Gastrocnemius medialis (tissue), 4 donors: ENCODE measurements at regions of chr6 and their contacts with region 1.

Region 1: DNA sequence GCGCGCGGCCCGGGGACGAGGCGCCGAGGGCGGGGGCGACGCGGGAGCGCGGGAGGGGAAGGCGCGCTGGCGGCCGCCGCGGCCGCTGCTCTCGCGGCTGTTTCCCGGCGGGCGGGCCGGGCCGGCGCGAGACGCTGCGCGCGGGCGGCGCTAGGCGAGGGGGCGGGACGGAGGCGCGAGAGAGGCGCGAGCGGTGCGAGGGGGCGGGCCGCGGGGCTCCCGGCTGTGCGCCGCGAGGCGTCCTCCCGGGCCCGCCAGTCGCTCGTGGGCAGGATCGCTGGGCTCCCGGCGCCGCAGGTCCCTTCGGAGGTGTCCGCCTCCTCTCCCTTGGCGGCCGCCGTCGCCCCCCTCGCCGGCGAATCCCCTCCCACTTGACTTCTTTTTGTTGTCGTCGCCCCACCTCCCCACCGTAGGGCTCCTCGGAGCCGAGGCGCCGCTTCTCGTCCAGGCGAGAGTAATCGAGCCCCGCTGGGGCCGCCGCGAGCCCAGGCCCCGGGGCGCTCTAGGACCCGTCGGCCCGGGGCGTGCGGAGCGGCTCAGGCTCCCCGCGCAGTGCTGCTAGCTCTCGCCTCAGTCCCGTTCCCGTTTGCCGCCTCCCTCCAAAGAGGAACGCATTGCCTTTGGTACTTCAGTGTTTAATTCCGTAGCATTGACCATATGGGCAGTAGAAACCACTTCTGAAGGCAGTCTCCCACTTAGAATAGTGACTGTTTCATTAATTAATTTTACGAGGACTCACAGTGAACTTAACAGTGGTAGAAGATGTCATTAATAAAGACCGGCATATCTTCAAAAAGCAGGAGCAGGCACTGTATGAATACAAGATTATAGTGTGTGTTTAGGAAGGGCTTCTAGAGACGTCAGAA is at the start of gene RANBP9:
- DNase-seq: peak; percentile 79 to 91
- ATAC-seq: peak; percentile 77 to 79
- H3K4me3 ChIP-seq: peak within 1 kb of the TSS; percentile 70 to 91 (median 77)
- H3K27ac ChIP-seq: peak within 1 kb of the TSS; percentile 91 to 99 (median 96)
- H3K4me1 ChIP-seq: peaks cover 25 to 33% of the 10 kb centered on the region in 2 donors
- H3K27me3 ChIP-seq: no peaks in the 10 kb centered on the region
- CTCF ChIP-seq: no peak
- POLR2A ChIP-seq: peak; percentile 88 to 94
- total RNA-seq, gene RANBP9: 44.7 to 93.1 (median 63.3) TPM

Region 2: GRCh38 chr6:13466304-13467215 is 245.4 kb before region 1 on chr6:
- in situ Hi-C with region 1: no loop called
- intact Hi-C with region 1: loop called (anchors 10 kb)
- DNase-seq: no peak
- ATAC-seq: peak in 1 of 2 donors; percentile 42
- H3K4me3 ChIP-seq: peak overlapping the region in 2 of 4 donors; percentile 0 to 17
- H3K27ac ChIP-seq: peak overlapping the region; percentile 43 to 67 (median 53)
- H3K4me1 ChIP-seq: peaks cover 20 to 36% of the 10 kb centered on the region in 2 donors
- H3K27me3 ChIP-seq: no peaks in the 10 kb centered on the region
- CTCF ChIP-seq: no peak
- POLR2A ChIP-seq: no peak

Region 3: DNA sequence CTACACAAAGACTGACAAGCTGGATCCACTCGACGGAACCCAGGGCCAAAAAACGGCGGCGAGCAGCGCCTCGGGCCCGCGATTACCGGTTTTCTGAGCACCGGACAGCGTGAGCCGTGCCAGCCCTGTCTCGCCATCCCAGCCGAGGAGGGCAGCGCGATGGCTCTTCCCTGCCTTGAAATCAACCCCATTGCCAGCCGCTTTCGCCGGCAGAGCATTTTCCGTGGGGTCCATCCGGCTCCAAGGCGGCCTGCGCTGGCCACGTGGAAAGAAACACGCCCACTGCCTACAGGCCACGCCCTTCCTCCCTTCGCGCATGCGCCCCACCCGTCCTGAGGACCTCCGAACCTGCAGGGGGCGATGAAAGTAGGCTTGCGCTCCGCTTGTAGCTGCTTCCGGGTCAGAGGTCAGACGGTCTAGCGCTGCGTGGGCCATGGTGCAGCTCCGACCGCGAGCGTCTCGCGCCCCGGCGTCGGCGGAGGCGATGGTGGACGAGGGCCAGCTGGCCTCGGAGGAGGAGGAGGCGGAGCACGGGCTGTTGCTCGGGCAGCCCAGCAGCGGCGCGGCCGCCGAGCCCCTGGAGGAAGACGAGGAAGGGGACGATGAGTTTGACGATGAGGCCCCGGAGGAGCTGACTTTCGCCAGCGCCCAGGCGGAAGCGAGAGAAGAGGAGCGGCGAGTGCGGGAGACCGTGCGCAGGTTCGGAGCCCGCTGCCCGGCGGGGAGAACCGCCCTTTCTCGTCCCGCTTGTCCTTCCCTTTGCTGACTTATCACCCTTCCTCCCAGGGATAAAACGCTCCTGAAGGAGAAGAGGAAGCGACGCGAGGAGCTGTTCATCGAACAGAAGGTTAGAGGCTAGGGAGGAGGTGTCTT is 96.8 kb before region 1 on chr6 and contains the start of gene NOL7:
- in situ Hi-C with region 1: loop called in 2 of 4 experiments (anchors 10 to 25 kb)
- intact Hi-C with region 1: loop called (anchors 1 kb)
- DNase-seq: peak; percentile 97 to 98
- ATAC-seq: peak; percentile 95 to 97
- H3K4me3 ChIP-seq: peak within 1 kb of the TSS; percentile 68 to 95 (median 78)
- H3K27ac ChIP-seq: peak within 1 kb of the TSS; percentile 84 to 91 (median 88)
- H3K4me1 ChIP-seq: peaks cover 21 to 34% of the 10 kb centered on the region in 2 donors
- H3K27me3 ChIP-seq: no peaks in the 10 kb centered on the region
- CTCF ChIP-seq: peak; percentile 88 to 93 (median 92)
- POLR2A ChIP-seq: peak; percentile 67 to 73
- total RNA-seq, gene NOL7: 44.9 to 69.0 (median 63.8) TPM

Region 4: DNA sequence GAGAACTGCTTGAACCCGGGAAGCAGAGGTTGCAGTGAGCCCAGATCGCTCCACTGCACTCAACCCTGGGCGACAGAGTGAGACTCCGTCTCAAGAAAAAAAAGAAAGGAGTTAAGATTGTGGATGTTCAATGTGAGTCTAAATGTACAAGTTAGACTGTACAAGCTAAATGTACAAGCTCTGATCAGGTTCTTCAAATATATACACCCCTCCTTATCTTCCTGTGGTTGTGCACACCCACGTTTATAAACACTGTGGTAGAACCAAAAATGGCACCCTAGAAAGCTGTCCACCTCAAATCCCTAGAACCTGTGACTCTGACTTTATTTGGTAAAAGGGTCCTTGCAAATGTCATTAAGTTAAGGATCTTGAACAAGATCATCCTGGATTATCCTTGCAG is 10.9 kb after region 1 on chr6:
- in situ Hi-C with region 1: no loop called
- intact Hi-C with region 1: no loop called
- DNase-seq: no peak
- ATAC-seq: no peak
- H3K4me3 ChIP-seq: no peak overlapping the region
- H3K27ac ChIP-seq: no peak overlapping the region
- H3K4me1 ChIP-seq: no peaks in the 10 kb centered on the region
- H3K27me3 ChIP-seq: no peaks in the 10 kb centered on the region
- CTCF ChIP-seq: no peak
- POLR2A ChIP-seq: no peak

Region 5: DNA sequence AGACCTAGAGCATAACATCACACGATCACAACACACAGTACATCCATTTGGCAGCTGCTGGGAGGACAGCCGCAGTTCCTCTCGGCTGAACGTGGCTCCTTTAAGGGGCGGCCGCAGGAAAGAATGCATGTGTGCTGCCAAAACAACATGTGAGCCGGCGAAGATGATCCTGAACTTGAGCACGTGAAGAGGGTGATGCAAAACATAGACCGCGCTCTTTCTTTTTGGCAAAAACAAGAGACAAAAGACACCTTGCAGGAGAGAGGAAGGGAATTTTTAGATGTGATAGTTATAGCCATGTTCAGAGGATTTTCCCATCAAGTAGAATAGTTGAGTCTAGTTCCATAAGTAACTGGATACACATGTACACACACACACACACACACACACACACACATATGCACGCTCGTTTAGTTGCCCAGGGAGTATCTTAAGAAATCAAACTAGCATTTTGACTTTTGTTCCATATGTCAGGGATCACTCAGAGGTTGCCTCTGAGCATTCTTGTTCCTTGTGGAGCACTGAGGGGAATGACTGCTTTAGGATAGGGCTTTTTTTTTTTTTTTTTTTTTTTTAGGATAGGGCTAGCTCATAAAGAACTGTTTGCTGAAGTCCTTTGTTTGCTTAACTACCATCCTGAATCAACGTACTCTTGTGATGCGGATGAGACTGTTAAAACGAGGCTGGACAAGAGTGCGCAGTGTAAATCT is 21.4 kb after region 1 on chr6:
- in situ Hi-C with region 1: no loop called
- intact Hi-C with region 1: loop called (anchors 1 kb)
- DNase-seq: peak; percentile 93 to 94
- ATAC-seq: peak; percentile 99
- H3K4me3 ChIP-seq: peak overlapping the region in 3 of 4 donors; percentile 18 to 39 (median 38)
- H3K27ac ChIP-seq: peak overlapping the region; percentile 63 to 77 (median 74)
- H3K4me1 ChIP-seq: peaks cover 0 to 13% of the 10 kb centered on the region in 2 donors
- H3K27me3 ChIP-seq: no peaks in the 10 kb centered on the region
- CTCF ChIP-seq: peak in 1 of 5 experiments; percentile 18
- POLR2A ChIP-seq: peak in 1 of 2 donors; percentile 1

Region 6: DNA sequence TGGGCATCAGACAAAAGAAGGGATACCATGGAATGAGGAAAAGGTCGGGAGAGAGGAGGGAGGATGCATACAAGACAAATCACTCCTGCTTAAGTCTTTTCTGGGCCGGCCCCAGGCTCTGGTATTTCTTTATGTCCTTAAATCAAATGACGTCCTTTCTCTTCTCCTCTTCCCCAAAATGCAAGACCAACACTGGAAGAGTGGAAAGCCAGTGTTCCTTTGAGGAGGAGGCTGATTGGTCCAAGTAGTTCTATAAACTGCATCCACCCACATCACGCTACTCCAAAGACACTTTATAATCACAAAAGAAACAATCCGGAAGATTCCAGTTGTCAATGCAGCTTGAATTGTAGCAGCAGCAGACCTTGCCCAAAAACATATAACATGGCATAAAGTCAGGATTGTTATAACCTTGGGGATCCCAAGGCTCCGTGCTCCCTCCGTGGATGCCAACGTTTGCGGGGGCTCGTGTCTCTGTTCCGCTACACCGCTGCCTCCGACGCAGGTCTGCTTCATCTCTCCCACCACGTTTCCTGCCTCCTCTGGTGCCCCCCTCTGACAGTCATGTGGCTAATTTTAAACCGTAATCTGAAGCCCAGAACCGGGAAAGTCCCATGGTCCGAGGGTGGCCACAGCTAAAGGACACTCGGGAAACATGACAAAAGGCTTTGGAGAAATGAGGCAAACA is 55.3 kb after region 1 on chr6:
- in situ Hi-C with region 1: no loop called
- intact Hi-C with region 1: loop called (anchors 1 kb)
- DNase-seq: peak; percentile 43 to 66
- ATAC-seq: peak; percentile 86 to 92
- H3K4me3 ChIP-seq: peak overlapping the region; percentile 20 to 39 (median 25)
- H3K27ac ChIP-seq: peak overlapping the region in 2 of 4 donors; percentile 8 to 60
- H3K4me1 ChIP-seq: peaks cover 3 to 7% of the 10 kb centered on the region in 2 donors
- H3K27me3 ChIP-seq: no peaks in the 10 kb centered on the region
- CTCF ChIP-seq: peak in 1 of 5 experiments; percentile 11
- POLR2A ChIP-seq: no peak

Region 7: DNA sequence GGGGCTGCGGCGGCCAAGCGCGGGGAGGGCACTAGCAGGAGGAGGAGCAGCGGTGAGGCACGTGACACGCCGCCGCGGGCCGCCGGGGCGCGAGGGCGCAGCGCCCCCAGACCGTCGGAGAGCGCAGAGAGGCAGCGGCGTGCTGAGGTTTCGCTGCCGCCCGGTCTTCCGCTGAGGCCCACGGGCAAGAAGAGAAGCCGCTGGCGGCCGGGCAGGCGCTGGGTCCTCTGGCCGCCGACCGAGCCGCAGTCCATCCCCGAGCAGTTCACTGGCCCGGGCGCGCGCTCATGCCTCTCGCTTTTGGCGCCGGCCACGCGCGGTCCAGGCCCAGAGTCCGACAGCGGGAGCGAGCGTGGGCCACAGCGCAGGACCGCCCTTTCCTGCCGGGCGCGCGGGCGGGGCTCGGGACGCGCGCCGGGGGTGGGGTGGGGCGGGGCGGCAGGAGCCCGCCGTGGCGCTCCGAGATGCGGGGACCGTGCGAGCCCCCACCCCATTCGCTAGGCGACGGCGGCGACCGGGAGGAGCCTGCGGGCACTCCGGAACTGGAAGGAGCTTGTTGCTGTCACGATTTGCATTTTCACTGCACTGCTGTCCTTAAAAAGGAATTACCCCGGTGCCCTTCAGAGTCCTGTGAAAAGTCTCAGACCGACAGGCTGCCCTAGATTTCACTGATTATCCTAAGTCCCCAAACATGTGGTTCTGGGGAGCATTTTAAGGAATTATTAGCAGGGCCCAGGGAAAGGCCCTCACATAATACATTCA is 102.4 kb after region 1 on chr6 and contains the start of gene MCUR1:
- in situ Hi-C with region 1: no loop called
- intact Hi-C with region 1: loop called (anchors 2 kb)
- DNase-seq: peak; percentile 75 to 84
- ATAC-seq: peak; percentile 88 to 92
- H3K4me3 ChIP-seq: peak within 1 kb of the TSS; percentile 74 to 98 (median 82)
- H3K27ac ChIP-seq: peak within 1 kb of the TSS; percentile 92 to 99 (median 98)
- H3K4me1 ChIP-seq: peaks cover 30 to 31% of the 10 kb centered on the region in 2 donors
- H3K27me3 ChIP-seq: no peaks in the 10 kb centered on the region
- CTCF ChIP-seq: peak in 3 of 5 experiments; percentile 29 to 50 (median 36)
- POLR2A ChIP-seq: peak; percentile 86 to 88
- total RNA-seq, gene MCUR1: 9.5 to 29.4 (median 18.1) TPM